ENCODE measurements at regions of chr14 and their contacts with region 1.

Region 1: DNA sequence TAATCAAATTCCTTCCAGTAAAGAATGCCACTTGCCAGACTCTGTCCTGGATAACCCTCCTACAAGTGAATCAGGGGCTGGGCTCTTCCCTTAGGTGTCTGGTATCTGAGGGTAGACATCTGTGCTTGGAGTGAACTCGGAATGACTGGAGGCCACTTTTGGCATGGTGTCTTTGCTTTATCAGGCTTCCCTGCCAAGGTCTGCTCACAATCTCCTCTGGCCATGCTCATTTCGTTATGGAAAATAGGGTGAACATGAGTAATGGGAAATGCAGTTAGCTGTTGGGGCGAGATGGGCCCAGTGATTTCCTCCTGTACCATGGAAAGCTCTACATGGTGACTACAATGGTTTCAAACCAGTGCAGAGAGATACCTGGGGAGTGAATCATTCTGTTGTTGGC is 212.9 kb downstream of the NRXN3 start:
- DNase-seq: no peak
- ATAC-seq: no peak
- H3K4me3 ChIP-seq: no peak overlapping the region
- H3K27ac ChIP-seq: no peak overlapping the region
- H3K4me1 ChIP-seq: no peaks in the 10 kb centered on the region
- H3K27me3 ChIP-seq: peaks cover 0 to 3% (median 0%) of the 10 kb centered on the region in 7 donors
- CTCF ChIP-seq: no peak

Region 2: DNA sequence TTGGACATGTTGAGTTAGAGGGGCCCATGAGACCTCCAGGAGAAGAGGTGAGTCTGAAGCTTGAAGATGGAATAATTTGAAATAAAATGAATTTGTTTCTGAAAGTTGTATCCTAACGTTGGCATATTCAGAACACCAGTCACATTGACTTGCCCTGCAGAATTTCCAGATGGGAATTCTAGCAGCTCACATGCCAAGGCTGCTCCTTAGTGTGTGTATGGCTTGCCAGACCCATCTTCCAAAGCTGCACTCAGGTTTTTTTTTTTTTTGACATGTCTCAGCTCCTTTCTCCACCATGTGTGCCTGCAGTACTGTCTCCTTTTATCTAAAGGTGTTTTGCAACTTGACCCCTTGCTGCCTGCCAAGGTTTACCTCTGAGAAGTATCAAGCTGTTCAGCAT is 49.0 kb after region 1 on chr14:
- intact Hi-C with region 1: loop called in 1 of 10 experiments (anchors 10 kb)
- DNase-seq: no peak
- ATAC-seq: no peak
- H3K4me3 ChIP-seq: no peak overlapping the region
- H3K27ac ChIP-seq: no peak overlapping the region
- H3K4me1 ChIP-seq: no peaks in the 10 kb centered on the region
- H3K27me3 ChIP-seq: peaks cover 0 to 4% (median 0%) of the 10 kb centered on the region in 7 donors
- CTCF ChIP-seq: no peak